Posterior cingulate gyrus (tissue), 11 donors: ENCODE measurements at regions of chr15 and their contacts with region 1.

Region 1: GRCh38 chr15:37877851-37878741 is 56.3 kb upstream of the TMCO5A start:
- DNase-seq: no peak

Region 2: GRCh38 chr15:36501063-36501678 is 1376.9 kb before region 1 on chr15:
- intact Hi-C with region 1: loop called (anchors 10 kb)
- DNase-seq: peak in 2 of 10 donors; percentile 15 to 30